BJ (cell line): ENCODE measurements at regions of chr6 and their contacts with region 1.

Region 1: DNA sequence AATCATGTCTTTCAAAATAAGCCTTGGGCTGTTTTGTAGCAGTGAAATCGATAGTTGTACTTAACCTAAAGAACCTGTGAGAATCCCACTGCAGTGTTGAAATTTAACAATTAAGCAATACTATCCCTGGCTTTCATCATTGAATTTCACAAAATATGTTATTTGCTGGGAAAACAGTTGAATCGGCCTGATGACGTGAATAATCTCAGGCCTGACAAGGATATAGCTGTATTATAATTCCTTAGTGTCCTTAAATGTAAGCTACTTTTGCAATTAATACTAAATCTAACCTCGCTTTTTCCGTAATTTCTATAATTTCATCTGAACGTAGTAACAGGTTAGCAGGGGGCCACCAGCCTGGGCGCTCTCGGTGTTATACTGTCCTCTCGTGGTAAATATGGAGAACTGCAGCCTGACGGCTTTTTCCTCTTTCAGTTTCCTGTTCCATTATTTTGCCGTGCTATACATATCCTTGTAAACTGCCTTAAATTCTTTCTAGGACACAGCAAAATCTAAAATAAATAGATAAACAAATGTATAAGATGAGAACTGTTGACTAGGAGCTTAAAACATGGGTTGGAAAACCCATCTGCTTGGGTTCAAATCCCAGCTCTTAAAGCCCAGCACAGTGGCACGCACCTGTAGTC is 24.0 kb downstream of the MTFR2 start:
- DNase-seq: no peak
- H3K4me3 ChIP-seq: no peak overlapping the region
- H3K27me3 ChIP-seq: no peaks in the 10 kb centered on the region
- CTCF ChIP-seq: peak; percentile 100

Region 2: GRCh38 chr6:135451693-135452092 is 774.5 kb before region 1 on chr6:
- CTCF ChIA-PET with region 1: interaction called, 13 read pairs
- POLR2A ChIA-PET with region 1: no interaction called
- DNase-seq: no peak
- H3K4me3 ChIP-seq: no peak overlapping the region
- H3K27me3 ChIP-seq: no peaks in the 10 kb centered on the region
- CTCF ChIP-seq: peak; percentile 54

Region 3: GRCh38 chr6:135938576-135939207 is 287.5 kb before region 1 on chr6:
- CTCF ChIA-PET with region 1: interaction called, 11 read pairs
- POLR2A ChIA-PET with region 1: no interaction called
- DNase-seq: no peak
- H3K4me3 ChIP-seq: no peak overlapping the region
- H3K27me3 ChIP-seq: no peaks in the 10 kb centered on the region
- CTCF ChIP-seq: peak; percentile 41

Region 4: GRCh38 chr6:136213012-136213539 is 13.1 kb before region 1 on chr6:
- CTCF ChIA-PET with region 1: interaction called, 14 read pairs
- POLR2A ChIA-PET with region 1: no interaction called
- DNase-seq: no peak
- H3K4me3 ChIP-seq: no peak overlapping the region
- H3K27me3 ChIP-seq: no peaks in the 10 kb centered on the region
- CTCF ChIP-seq: no peak

Region 5: DNA sequence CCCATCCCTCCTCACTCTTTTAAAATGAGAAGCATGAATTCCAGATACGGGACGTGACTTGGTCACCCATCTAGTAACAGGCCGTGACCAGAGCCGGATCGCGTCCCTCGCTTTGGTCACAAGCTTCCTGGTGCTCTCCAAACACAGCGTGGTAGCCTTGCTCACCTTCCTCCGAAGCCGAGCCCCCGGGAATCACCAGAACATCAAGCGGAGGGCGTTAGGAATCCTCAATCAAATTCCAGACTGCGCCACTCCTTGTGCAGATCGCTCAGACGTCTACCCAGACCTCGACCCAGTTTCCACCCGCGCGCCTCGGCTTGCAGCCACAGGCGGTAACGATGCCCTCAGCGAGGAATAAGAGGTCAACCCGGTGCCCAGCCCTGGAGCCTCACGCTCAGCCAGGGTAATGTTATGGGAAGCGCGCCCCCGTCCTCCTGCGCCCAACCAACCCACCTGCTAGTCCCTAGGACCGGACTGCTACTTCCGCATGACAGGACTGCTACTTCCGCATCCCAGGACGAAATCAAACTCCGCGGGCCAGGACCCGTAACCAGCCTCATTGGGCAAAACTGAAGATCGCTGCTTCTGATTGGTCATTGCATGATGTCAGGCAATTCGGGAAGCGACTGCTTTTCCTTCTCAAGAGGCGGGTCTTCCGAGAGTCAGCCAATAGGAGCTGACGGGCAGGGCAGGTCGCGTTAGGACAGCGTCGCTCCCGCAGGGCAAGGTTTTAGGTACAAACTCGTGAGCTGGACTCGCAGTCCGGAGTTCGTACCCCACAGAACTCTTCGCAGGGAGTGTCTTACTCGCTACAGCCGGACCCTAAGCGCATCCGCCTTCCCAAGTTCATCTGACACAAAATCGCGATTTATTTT is 23.9 kb after region 1 on chr6 and contains the start of gene MTFR2:
- CTCF ChIA-PET with region 1: interaction called, 10 read pairs
- POLR2A ChIA-PET with region 1: no interaction called
- DNase-seq: peak; percentile 97
- H3K4me3 ChIP-seq: peak within 1 kb of the TSS; percentile 60
- H3K27me3 ChIP-seq: no peaks in the 10 kb centered on the region
- CTCF ChIP-seq: no peak
- polyA plus RNA-seq, gene MTFR2: 5.5 and 6.1 TPM in 2 replicates